Left lung (tissue), 14 donors: ENCODE measurements at regions of chr3 and their contacts with region 1.

Region 1: DNA sequence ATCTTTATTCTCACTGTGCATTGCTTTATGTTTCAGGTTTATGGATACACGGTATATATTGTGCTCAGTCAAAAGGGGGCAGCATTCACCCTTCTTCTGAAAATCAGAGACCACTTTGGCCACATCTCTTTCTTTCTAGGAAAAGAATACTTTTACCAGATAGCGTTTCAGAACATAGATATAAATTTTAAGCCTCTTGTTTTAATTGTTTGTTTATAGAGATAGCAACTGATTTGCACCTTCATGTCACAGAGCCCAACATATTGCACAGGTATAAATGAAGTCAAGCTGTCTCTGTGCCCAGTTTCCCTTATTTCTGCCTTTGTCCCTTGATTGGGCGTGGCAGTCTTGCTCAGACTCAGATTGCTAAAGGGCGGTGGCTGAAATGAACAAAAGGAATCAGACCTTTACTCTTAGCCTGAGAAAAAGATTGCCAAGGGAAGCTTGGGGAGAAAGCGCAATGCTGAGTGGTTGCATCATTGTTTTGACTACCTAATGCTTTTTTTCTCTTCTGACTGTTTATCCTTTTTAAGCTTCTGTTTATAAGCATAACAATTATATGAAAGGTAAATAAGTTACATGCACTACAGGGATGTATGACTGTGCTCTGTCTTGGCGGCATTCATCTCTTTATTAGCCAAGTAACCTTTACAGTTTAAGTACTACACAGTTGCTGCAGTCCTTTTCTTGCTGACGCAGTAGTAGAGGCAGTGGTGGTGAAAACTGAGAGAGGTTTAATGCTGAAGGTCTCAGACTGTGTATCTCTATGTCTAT is 70.8 kb upstream of the ZBTB20 start:
- DNase-seq: peak in 2 of 4 donors; percentile 46 to 76
- ATAC-seq: peak; percentile 88
- H3K4me3 ChIP-seq: no peak overlapping the region
- H3K27ac ChIP-seq: peak overlapping the region in 1 of 2 donors; percentile 47
- H3K4me1 ChIP-seq: peaks cover 0 to 9% of the 10 kb centered on the region in 2 donors
- H3K27me3 ChIP-seq: no peaks in the 10 kb centered on the region
- CTCF ChIP-seq: peak; percentile 45 to 47

Region 2: DNA sequence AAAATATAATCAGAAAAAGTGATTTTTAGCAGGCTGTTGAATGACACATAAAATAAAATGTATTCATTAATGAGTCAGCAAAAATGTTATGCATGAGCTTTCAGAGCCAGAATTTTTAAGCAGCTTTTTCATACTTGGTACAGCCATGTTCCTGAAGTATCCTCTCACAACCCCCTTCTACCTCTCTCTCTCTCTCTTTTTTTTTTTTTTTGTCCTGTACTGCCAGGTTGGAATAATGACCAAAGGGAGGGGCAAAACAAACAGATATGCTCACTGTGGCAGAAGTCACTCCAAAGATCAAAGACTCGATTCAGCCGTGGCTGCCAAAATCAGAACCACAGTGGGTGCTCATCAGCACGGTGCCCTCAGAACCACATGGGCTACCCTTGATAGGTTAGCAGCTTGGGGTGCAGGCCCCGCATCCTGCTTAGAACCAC is 453.8 kb before region 1 on chr3:
- intact Hi-C with region 1: no loop called
- DNase-seq: no peak
- ATAC-seq: peak; percentile 20
- H3K4me3 ChIP-seq: no peak overlapping the region
- H3K27ac ChIP-seq: no peak overlapping the region
- H3K4me1 ChIP-seq: peaks cover 3 to 9% of the 10 kb centered on the region in 2 donors
- H3K27me3 ChIP-seq: no peaks in the 10 kb centered on the region
- CTCF ChIP-seq: no peak

Region 3: DNA sequence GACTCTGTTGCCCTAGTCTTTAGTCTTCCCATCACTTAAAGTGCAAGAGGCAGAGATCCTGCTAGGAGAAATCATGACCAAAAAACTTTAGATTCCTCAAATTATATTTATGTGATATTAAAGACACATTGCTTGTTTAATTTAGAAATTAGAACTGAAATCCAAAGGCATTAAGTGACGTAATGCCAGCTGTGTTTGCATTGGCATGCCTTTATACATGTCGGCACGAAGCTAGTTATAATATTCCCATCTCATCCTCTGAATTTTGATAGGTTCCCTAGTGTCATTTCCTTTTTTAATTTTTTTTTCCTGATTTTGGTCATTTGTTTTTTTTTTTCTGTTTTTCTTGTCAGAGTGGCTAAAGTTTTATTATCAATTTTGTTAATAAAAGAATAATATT is 132.7 kb after region 1 on chr3:
- intact Hi-C with region 1: no loop called
- DNase-seq: no peak
- ATAC-seq: no peak
- H3K4me3 ChIP-seq: no peak overlapping the region
- H3K27ac ChIP-seq: no peak overlapping the region
- H3K4me1 ChIP-seq: no peaks in the 10 kb centered on the region
- H3K27me3 ChIP-seq: no peaks in the 10 kb centered on the region
- CTCF ChIP-seq: no peak

Region 4: GRCh38 chr3:115562636-115563267 is 344.9 kb after region 1 on chr3:
- intact Hi-C with region 1: no loop called
- DNase-seq: no peak
- ATAC-seq: no peak
- H3K4me3 ChIP-seq: no peak overlapping the region
- H3K27ac ChIP-seq: no peak overlapping the region
- H3K4me1 ChIP-seq: no peaks in the 10 kb centered on the region
- H3K27me3 ChIP-seq: no peaks in the 10 kb centered on the region
- CTCF ChIP-seq: no peak

Region 5: DNA sequence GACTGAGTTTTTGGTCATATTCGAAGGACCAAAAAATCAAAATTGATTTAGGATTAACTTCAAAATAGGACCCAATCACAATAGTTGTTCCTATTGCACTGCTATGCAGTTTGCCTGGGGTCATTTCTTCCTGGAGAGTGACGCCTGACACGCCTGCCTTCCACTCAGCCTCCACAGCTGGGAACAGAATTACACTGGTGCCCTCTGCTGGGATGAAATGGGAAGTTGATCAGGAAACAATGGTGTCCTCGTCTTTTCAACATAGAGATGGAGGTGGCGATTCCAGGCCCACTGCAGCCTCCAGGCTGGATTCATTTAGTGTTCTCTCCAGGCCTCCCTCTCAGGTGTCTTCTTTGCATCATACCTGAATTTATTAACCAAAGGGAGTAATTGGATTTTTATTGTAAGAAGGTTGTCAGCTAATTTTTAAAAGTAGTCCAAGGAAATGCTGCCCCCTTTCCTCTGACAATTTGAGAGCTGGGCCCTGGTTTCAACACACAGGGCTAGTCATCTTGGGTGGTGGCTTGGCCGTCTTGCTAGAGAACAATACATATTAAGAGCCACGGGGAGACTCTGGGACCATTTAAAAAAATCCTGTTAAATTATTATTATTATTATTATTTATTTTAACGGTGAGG is 475.1 kb after region 1 on chr3:
- intact Hi-C with region 1: loop called in 1 of 2 experiments (anchors 10 kb)
- DNase-seq: peak; percentile 45 to 80 (median 60)
- ATAC-seq: peak; percentile 99
- H3K4me3 ChIP-seq: no peak overlapping the region
- H3K27ac ChIP-seq: no peak overlapping the region
- H3K4me1 ChIP-seq: no peaks in the 10 kb centered on the region
- H3K27me3 ChIP-seq: no peaks in the 10 kb centered on the region
- CTCF ChIP-seq: peak; percentile 58 to 75

Region 6: GRCh38 chr3:115819785-115820384 is 602.0 kb after region 1 on chr3:
- intact Hi-C with region 1: loop called in 1 of 2 experiments (anchors 10 kb)
- DNase-seq: peak in 3 of 4 donors; percentile 50 to 90 (median 66)
- ATAC-seq: peak; percentile 96
- H3K4me3 ChIP-seq: no peak overlapping the region
- H3K27ac ChIP-seq: no peak overlapping the region
- H3K4me1 ChIP-seq: no peaks in the 10 kb centered on the region
- H3K27me3 ChIP-seq: no peaks in the 10 kb centered on the region
- CTCF ChIP-seq: peak; percentile 91 to 92